Dendritic cell treated with granulocyte-macrophage colony-stimulating factor and Interleukin-4, amounts not matched to agents 40 ng/mL and 50 ng/mL, for 4 days (primary cell): ENCODE measurements at regions of chr1 and their contacts with region 1.

Region 1: GRCh38 chr1:93804412-93804811 is 74.6 kb downstream of the DNTTIP2 start:
- H3K4me3 Mint-ChIP-seq: no peak overlapping the region
- H3K27ac Mint-ChIP-seq: no peak overlapping the region
- H3K4me1 Mint-ChIP-seq: peaks cover 6% of the 10 kb centered on the region
- H3K27me3 Mint-ChIP-seq: no peaks in the 10 kb centered on the region

Region 2: GRCh38 chr1:93749894-93750301 is 54.5 kb before region 1 on chr1:
- intact Hi-C with region 1: loop called (anchors 10 kb)
- H3K4me3 Mint-ChIP-seq: no peak overlapping the region
- H3K27ac Mint-ChIP-seq: peak overlapping the region; percentile 82
- H3K4me1 Mint-ChIP-seq: peaks cover 48% of the 10 kb centered on the region
- H3K27me3 Mint-ChIP-seq: peaks cover 9% of the 10 kb centered on the region

Region 3: DNA sequence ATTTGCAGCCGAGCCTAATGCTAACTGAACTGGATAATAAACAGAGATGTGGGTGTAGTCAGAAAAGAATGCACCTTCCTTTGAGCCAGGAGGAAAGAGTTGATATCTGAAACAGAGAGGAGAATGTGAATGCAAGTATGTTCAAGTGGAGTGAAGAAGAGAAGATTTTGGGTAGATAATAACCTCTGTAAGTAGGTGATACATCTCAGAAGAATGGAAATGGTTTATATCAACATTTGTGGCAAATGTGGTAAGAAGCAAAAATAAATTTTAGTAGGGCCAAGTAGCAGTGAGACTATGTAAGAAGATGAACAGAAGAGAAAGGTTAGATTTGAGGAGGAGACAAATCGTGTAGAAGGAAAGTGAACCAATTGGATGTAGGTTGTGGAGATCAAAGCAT is 76.3 kb after region 1 on chr1:
- intact Hi-C with region 1: no loop called
- H3K4me3 Mint-ChIP-seq: no peak overlapping the region
- H3K27ac Mint-ChIP-seq: no peak overlapping the region
- H3K4me1 Mint-ChIP-seq: peaks cover 32% of the 10 kb centered on the region
- H3K27me3 Mint-ChIP-seq: no peaks in the 10 kb centered on the region